ENCODE measurements at regions of chr9 and their contacts with region 1.

Region 1: GRCh38 chr9:131678499-131679111 is 61.3 kb downstream of the RAPGEF1 start:
- DNase-seq: peak; percentile 91
- ATAC-seq: peak; percentile 99
- H3K4me3 Mint-ChIP-seq: peak overlapping the region; percentile 72
- H3K27ac Mint-ChIP-seq: peak overlapping the region; percentile 87
- H3K4me1 Mint-ChIP-seq: peaks cover 88% of the 10 kb centered on the region
- H3K27me3 Mint-ChIP-seq: no peaks in the 10 kb centered on the region

Region 2: DNA sequence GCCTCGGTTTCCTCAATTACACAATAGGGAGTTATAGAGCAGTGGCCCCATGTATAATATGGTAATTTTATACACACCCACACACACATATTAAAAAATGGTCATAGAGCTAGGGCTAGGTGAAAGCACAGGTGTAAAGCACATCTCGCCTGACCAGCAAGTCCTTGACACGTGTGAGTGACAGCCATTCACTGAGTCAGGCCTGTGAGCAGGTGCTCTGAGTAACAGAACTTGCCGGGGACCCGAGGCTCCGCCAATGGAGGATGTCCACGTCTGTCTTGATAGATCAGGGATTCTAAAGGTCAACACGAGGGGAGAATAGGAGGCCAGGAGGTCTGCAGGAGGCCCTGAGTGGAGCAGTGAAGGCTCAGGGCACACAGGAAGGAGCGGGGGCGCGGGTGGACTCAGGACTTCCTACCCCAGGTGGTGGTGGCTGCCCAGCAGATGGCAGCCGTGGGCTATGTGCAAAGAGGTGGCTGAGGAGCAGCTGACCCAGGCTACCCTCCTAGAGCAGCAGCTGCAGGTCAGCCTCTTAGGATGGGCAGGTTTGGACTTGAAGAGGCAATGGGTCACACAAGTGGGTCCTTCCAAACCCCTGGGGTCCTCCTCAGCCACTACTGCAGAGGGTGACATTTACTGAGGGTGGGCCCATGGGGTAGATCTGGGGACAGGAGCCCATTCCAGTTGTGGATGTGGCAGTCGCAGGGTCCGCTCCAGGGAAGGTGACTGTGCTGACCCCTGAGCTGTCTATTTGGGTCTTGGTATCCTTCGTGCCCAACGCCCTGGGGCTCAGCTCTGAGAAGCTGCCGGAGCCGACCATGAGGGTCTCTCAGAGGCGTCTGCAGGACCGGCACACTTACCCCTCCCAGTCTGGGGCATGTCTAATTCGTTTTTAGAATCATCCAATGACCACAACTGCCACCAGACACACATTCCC is 87.4 kb before region 1 on chr9:
- CTCF ChIA-PET with region 1: interaction called, 4 read pairs
- POLR2A ChIA-PET with region 1: no interaction called
- intact Hi-C with region 1: loop called in 1 of 2 experiments (anchors 1 kb)
- DNase-seq: peak; percentile 90
- ATAC-seq: peak; percentile 94
- H3K4me3 Mint-ChIP-seq: no peak overlapping the region
- H3K27ac Mint-ChIP-seq: peak overlapping the region; percentile 85
- H3K4me1 Mint-ChIP-seq: peaks cover 28% of the 10 kb centered on the region
- H3K27me3 Mint-ChIP-seq: no peaks in the 10 kb centered on the region

Region 3: DNA sequence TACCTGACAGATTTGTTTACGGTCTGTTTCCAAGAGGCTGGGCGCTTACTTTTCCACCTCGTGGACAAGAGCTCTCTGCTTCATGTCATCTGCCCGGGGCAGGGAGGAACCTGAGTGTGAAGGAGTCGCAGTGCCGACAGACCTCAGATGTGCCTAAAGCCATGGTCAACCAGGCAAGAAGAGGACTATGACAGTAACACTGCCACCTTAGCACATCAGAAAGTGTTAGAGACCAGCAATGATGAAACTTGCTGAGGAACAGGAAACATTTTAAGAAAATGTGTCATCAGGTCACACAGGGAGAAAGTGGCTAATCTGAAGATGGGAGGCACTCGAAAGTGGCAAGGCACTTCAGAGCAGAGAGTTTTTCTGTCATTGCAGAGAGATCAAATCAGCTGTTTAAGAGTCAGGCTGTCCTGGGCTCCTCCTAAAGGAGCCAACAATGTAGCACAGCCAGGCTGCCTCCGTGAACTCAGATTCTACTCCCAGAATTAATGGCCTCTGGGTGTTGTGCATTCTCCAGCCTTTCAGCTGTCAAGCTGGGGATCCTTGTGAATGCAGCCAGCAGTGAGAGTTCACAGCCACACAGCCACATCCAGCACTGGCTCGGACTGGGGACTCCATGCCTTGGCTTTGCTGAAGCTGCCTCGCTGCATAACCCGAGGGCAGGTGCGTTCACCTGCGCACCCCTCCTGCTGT is 33.4 kb before region 1 on chr9:
- CTCF ChIA-PET with region 1: interaction called, 12 read pairs
- POLR2A ChIA-PET with region 1: interaction called, 8 read pairs
- intact Hi-C with region 1: loop called in 1 of 2 experiments (anchors 2 kb)
- DNase-seq: peak; percentile 54
- ATAC-seq: peak; percentile 65
- H3K4me3 Mint-ChIP-seq: no peak overlapping the region
- H3K27ac Mint-ChIP-seq: peak overlapping the region; percentile 89
- H3K4me1 Mint-ChIP-seq: peaks cover 63% of the 10 kb centered on the region
- H3K27me3 Mint-ChIP-seq: no peaks in the 10 kb centered on the region

Region 4: DNA sequence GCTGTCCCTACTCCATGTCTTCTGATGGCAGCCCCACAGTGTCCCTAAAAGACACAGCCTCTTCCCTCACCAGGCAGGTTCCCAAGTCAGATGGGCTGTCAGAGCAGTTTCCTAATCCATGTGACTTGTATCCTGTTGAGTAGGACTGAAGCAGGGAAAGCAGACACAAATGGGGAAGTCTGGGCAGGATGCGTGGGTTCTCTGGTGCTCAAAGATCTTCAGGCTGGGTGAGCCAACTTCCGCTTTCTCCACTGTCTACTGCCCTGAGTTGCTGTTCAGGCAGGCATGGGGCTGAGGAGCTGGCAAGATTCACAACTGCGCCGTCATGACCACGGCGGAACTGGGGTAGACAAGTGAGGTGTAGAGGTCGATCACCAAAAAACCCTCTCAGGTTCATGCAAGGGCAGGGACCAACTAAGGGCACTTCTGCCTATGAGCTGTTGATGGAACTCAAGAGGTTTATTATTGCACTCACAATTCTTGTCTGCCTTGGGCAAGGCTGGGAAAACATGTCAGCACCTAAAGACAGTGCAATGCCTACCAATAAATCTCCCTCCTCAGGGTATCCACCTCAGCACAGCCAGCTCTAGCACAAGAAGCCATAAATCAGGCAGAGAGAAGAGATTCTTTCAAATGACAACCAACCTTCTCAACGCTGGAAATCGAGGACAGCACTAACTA is 22.1 kb before region 1 on chr9:
- CTCF ChIA-PET with region 1: interaction called, 3 read pairs
- POLR2A ChIA-PET with region 1: interaction called, 4 read pairs
- intact Hi-C with region 1: loop called in 1 of 2 experiments (anchors 1 kb)
- DNase-seq: peak; percentile 81
- ATAC-seq: peak; percentile 68
- H3K4me3 Mint-ChIP-seq: peak overlapping the region; percentile 39
- H3K27ac Mint-ChIP-seq: peak overlapping the region; percentile 87
- H3K4me1 Mint-ChIP-seq: peaks cover 83% of the 10 kb centered on the region
- H3K27me3 Mint-ChIP-seq: no peaks in the 10 kb centered on the region

Region 5: GRCh38 chr9:131661568-131662288 is 16.9 kb before region 1 on chr9:
- CTCF ChIA-PET with region 1: interaction called, 15 read pairs
- POLR2A ChIA-PET with region 1: interaction called, 27 read pairs
- intact Hi-C with region 1: loop called in 1 of 2 experiments (anchors 1 kb)
- DNase-seq: peak; percentile 90
- ATAC-seq: peak; percentile 91
- H3K4me3 Mint-ChIP-seq: peak overlapping the region; percentile 45
- H3K27ac Mint-ChIP-seq: peak overlapping the region; percentile 88
- H3K4me1 Mint-ChIP-seq: peaks cover 86% of the 10 kb centered on the region
- H3K27me3 Mint-ChIP-seq: no peaks in the 10 kb centered on the region

Region 6: DNA sequence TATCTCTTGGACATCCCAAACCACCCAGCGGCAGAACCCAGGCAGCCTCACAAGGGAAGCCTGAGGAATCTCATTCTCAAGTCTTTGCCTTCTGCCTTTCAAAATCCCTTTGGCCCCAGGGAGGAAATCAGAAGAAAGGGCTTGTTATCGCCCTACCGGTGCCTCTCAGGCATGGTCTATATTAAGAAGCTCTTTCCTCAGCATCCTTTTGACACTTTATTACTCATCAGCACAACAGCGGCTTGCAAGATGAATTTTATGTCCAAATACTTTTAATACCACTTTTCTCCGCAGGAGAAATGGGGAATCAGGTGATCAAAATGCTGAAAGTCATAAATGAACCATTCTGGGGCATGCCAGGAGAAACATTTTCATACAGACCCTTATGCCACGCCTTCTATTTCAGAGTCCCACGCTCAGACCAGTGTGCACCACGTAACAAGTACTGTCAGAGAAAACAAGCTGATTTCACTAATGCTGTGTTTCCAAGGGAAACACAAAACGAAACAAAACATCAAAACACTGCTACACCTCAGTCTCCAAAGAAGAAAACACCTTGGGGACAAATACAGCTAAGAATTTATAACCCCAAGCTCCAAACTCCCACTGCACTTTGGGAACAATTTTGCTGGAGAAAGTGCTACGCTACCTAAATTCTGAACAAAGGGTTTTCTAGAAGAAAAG is 31.3 kb after region 1 on chr9:
- CTCF ChIA-PET with region 1: interaction called, 11 read pairs
- POLR2A ChIA-PET with region 1: interaction called, 5 read pairs
- intact Hi-C with region 1: loop called in 1 of 2 experiments (anchors 1 kb)
- DNase-seq: peak; percentile 66
- ATAC-seq: peak; percentile 88
- H3K4me3 Mint-ChIP-seq: peak overlapping the region; percentile 53
- H3K27ac Mint-ChIP-seq: peak overlapping the region; percentile 90
- H3K4me1 Mint-ChIP-seq: peaks cover 87% of the 10 kb centered on the region
- H3K27me3 Mint-ChIP-seq: no peaks in the 10 kb centered on the region